ENCODE measurements at regions of chr3 and their contacts with region 1.

Region 1: DNA sequence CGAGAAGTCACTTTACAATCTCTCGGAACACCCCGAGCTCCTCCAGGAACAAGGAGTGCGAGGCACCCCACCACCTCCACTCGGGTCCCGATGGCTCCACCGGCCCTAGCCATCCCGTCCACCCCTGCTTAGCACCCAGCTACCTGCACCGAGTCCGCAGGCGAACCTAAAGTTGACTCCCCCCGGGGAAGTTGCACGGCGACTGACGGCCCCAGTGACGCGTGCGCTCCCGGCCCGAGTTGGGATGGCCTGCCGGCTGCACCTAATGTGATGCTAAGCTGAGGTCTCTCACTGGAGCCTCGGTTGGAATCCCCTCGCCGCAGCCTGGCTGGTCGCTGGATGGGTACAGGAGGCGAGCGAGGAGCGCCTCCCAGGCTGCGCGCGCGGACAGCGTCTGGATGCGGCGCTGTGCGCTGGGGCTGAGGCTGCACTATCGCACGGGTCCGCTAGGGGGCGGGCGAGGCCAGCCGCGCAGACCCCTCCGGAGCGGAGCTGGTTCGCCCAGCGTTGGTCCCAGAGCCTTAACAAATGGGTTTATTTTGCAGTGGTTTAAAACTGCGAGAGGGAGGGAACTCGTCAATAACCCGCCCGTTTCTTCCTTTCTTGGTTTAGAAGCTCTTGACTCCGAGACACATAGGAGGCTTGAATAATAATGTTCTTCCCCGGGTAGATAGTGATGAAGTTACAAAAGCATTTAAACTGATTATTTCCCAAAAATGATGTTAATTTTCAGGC is at the start of gene OXTR:
- DNase-seq: peak; percentile 44 to 80
- H3K4me3 ChIP-seq: peak within 1 kb of the TSS; percentile 26
- H3K4me1 ChIP-seq: no peaks in the 10 kb centered on the region
- H3K27me3 ChIP-seq: no peaks in the 10 kb centered on the region

Region 2: DNA sequence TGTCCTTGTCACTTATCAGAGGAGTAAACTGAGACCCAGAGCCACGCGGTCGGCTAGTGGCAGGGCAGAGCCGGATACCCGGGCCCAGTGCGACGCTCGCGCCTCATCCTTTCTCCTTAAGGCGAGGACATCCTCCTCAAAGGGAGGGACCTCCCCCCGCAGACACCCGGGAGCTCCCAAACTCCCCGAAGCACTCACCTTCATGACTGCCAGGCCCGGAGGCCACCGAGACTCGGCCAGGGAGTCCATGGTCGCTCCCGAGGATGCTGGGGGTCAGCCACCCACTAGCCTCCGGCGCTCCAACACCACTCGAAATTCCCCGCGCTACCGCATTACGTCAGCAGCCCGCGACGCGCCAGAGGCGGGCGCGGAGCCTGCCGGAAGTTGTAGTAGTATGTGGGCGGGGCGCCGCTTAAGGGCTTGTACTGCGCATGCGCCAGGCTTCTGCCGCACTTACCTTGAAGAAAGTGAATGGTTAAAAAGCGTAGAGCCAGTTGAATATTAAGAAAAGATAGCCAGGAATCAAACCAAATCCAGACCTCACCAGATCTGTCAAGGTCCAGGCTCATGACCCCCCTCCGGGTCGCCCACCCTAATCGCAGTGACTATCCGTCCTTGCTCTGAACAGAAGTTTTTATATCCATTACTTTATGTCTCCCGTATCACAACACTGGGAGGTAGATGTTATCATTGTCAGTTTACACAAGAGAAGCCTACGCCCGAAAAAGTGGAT is 194.0 kb after region 1 on chr3 and contains the start of gene RAD18:
- in situ Hi-C with region 1: no loop called
- DNase-seq: peak; percentile 87 to 95
- H3K4me3 ChIP-seq: peak within 1 kb of the TSS; percentile 79
- H3K4me1 ChIP-seq: peaks cover 5% of the 10 kb centered on the region; the same call in 1 of the 2 replicates
- H3K27me3 ChIP-seq: peaks cover under 1% of the 10 kb centered on the region

Region 3: GRCh38 chr3:9302425-9303181 is 533.3 kb after region 1 on chr3:
- in situ Hi-C with region 1: loop called (anchors 25 kb)
- DNase-seq: peak; percentile 72 to 89
- H3K4me3 ChIP-seq: no peak overlapping the region
- H3K4me1 ChIP-seq: no peaks in the 10 kb centered on the region; the same call in 1 of the 2 replicates
- H3K27me3 ChIP-seq: no peaks in the 10 kb centered on the region